ENCODE measurements at regions of chr5 and their contacts with region 1.

Region 1: GRCh38 chr5:132293066-132293991 is 865 bp upstream of the SLC22A4 start:
- DNase-seq: peak; percentile 92 to 97
- ATAC-seq: peak; percentile 86
- H3K4me3 ChIP-seq: peak overlapping the region; percentile 42 to 48
- H3K27ac ChIP-seq: peak overlapping the region; percentile 18 to 98
- H3K4me1 ChIP-seq: no peaks in the 10 kb centered on the region
- H3K27me3 ChIP-seq: no peaks in the 10 kb centered on the region

Region 2: GRCh38 chr5:130923543-130924124 is 1369.7 kb before region 1 on chr5:
- intact Hi-C with region 1: no loop called
- DNase-seq: no peak
- ATAC-seq: no peak
- H3K4me3 ChIP-seq: no peak overlapping the region
- H3K27ac ChIP-seq: no peak overlapping the region
- H3K4me1 ChIP-seq: no peaks in the 10 kb centered on the region
- H3K27me3 ChIP-seq: no peaks in the 10 kb centered on the region

Region 3: DNA sequence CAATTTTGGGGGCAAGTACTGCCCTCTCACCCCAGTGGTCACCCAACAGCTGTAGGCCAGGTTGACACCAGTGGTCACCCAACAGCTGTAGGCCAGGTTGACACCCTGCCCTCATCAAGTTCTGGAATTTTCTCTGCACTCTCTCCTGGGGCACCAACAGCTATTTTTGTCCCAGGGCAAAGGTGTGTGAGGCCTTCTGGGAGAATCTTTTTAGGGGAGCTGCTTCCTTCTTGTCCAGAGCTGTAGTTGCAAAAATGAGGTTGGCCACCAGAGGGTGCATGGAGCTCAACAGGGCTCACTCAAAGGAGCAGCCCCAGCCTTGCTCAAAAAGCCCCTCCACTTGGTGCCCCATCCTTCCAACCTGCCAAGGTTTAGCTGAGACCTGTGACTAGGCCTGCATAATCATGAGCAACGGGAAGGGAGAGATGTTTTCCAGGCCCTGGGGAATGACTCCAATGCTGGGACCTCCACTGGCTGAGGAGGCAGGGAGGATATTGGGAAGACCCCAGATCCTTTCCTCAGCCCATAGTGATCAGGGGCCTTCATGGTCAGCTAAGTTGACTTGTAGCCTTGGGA is 55.1 kb before region 1 on chr5:
- intact Hi-C with region 1: loop called in 1 of 2 experiments (anchors 5 kb)
- DNase-seq: peak; percentile 80 to 89
- ATAC-seq: peak; percentile 84
- H3K4me3 ChIP-seq: no peak overlapping the region
- H3K27ac ChIP-seq: no peak overlapping the region
- H3K4me1 ChIP-seq: no peaks in the 10 kb centered on the region
- H3K27me3 ChIP-seq: no peaks in the 10 kb centered on the region

Region 4: GRCh38 chr5:132354381-132355139 is 61.2 kb after region 1 on chr5:
- intact Hi-C with region 1: loop called in 1 of 2 experiments (anchors 5 kb)
- DNase-seq: no peak
- ATAC-seq: no peak
- H3K4me3 ChIP-seq: no peak overlapping the region
- H3K27ac ChIP-seq: no peak overlapping the region
- H3K4me1 ChIP-seq: peaks cover 0 to 4% of the 10 kb centered on the region in 2 donors
- H3K27me3 ChIP-seq: no peaks in the 10 kb centered on the region

Region 5: DNA sequence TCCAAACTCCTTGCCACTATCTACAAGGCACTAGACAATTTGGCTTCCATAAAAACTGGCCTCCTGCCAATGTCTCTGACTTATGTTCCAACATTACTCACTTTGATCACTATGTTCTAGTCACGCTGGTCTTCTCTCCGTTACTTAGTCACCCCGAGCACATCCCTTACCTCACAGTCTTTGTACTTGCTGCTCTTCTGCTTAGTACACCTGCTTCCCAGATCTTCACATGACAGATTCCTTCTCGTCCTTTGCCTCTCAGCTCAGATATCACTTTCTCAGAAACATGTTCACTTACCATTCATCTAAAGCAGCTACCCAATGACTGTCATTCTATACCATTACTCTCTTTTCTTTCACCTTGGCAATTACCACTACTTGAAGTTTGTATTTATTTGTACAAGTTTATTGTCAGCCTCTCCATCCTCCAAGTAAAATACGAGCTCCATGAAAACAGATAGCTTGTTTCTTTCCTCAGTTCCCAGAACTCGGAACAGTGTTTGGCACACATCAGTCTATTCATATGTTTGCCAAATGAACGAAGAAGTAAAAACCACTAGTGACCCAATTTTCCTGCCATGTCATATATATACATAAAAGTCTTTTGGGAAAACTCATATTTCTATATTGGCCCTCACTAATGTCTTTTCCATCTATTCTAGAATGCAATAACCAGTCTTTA is 70.2 kb after region 1 on chr5:
- intact Hi-C with region 1: loop called (anchors 5 kb)
- DNase-seq: no peak
- ATAC-seq: peak; percentile 73
- H3K4me3 ChIP-seq: no peak overlapping the region
- H3K27ac ChIP-seq: peak overlapping the region; percentile 43 to 51
- H3K4me1 ChIP-seq: peaks cover 4 to 9% of the 10 kb centered on the region in 2 donors
- H3K27me3 ChIP-seq: no peaks in the 10 kb centered on the region

Region 6: GRCh38 chr5:132576123-132576522 is 282.8 kb after region 1 on chr5:
- intact Hi-C with region 1: no loop called
- DNase-seq: no peak
- ATAC-seq: no peak
- H3K4me3 ChIP-seq: no peak overlapping the region
- H3K27ac ChIP-seq: no peak overlapping the region
- H3K4me1 ChIP-seq: no peaks in the 10 kb centered on the region
- H3K27me3 ChIP-seq: no peaks in the 10 kb centered on the region